ENCODE measurements at regions of chr2 and their contacts with region 1.

Region 1: GRCh38 chr2:72862239-72862988 is 24.8 kb upstream of the SPR start:
- DNase-seq: peak; percentile 38
- H3K4me3 ChIP-seq: peak overlapping the region; percentile 39
- CTCF ChIP-seq: peak; percentile 100

Region 2: DNA sequence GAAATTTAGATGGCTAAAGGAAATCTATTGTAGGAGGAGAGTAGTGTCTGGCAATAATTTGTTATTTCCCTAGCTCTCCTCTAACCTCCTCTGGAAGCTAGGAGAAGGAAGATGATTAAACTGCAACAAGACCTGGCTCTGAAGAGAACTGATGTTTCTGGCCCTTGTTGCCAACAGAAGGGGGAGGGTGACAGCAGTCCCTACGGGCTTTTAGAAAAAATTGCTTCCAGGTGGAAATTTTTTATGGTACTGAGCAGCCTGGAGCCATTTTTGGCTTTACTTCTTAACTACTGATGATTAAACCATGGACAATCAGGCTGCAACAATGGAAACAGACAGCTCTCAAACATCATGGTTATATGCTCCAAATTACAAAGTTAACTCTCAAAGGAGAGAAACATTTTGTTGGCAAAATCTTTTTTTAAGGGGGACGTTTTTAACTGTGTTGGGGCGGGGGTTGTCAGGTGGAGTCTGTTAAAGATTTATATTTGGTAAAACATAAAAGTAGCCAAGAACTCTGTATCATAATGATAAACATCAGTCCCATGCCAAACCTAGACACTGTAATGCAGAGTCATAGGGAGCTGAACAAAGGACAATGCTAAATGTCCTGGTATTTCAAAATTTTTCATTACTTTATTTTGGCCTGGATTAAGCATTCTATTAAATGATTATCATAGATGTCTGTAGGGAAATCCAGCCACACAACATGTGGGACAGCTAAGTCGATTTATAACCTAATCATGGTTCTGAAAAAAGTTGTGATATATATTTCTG is 106.6 kb before region 1 on chr2:
- CTCF ChIA-PET with region 1: interaction called, 25 read pairs
- POLR2A ChIA-PET with region 1: no interaction called
- DNase-seq: no peak
- H3K4me3 ChIP-seq: no peak overlapping the region
- CTCF ChIP-seq: no peak

Region 3: GRCh38 chr2:72780477-72780876 is 81.9 kb before region 1 on chr2:
- CTCF ChIA-PET with region 1: interaction called, 18 read pairs
- POLR2A ChIA-PET with region 1: no interaction called
- DNase-seq: no peak
- H3K4me3 ChIP-seq: no peak overlapping the region
- CTCF ChIP-seq: no peak

Region 4: GRCh38 chr2:72793798-72794440 is 68.5 kb before region 1 on chr2:
- CTCF ChIA-PET with region 1: interaction called, 31 read pairs
- POLR2A ChIA-PET with region 1: no interaction called
- DNase-seq: no peak
- H3K4me3 ChIP-seq: no peak overlapping the region
- CTCF ChIP-seq: no peak

Region 5: DNA sequence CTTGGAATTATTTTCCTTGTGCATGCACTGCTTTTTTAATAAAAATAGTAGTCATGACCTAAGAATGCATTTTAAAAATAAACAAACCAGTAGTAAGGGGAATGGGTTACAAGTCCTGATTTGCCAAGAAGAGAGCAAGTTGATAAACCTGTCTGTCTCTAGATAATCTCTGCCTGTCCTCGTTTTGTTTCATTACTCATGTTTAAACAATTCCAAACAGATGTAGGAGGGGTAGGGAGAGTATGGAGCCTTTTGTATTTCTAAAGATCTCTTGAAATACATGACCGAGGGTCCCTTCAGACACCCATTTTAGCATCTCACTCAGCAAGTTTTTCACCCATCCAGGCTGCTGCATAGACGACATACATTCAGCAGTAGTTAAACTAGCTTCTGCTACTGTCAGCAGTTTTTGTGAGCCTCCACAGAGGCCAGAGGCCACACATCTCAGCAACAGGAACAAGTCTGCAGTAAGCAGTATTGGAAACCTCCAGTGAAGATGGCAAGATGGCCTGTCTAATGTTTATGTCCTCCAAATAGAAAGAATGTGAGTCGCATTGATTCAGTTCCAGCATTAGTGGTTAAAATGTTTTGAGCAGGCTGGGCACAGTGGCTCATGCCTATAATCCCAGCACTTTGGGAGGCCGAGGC is 34.3 kb before region 1 on chr2:
- CTCF ChIA-PET with region 1: interaction called, 19 read pairs
- POLR2A ChIA-PET with region 1: no interaction called
- DNase-seq: peak; percentile 29
- H3K4me3 ChIP-seq: no peak overlapping the region
- CTCF ChIP-seq: no peak

Region 6: DNA sequence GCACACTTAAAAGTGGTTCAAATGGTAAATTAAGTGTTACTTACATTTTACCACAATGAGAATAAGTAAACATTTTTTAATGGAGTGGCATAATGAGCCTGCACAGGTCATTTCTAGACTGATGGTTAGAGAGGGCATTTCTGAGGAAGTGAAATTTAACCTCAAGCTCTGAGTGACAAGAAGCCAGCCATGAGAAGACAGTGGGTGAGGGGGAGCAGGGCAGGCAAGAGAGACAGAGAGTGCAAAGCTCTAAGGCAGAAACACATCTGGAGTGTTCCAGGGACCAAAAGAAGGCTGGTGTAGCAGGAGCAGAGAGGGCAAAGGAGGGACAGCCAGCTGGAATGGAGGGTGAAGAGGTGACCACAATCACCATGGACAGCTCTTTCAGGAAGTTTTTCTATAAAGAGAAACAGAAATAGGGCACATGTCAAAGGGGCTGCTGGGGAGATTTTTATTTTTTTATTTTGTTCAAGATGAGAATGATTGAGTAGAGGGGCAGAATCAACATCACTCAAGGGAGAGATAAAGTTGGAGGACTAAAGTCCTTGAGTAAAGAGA is 15.8 kb before region 1 on chr2:
- CTCF ChIA-PET with region 1: interaction called, 47 read pairs
- POLR2A ChIA-PET with region 1: no interaction called
- DNase-seq: no peak
- H3K4me3 ChIP-seq: no peak overlapping the region
- CTCF ChIP-seq: no peak

Region 7: DNA sequence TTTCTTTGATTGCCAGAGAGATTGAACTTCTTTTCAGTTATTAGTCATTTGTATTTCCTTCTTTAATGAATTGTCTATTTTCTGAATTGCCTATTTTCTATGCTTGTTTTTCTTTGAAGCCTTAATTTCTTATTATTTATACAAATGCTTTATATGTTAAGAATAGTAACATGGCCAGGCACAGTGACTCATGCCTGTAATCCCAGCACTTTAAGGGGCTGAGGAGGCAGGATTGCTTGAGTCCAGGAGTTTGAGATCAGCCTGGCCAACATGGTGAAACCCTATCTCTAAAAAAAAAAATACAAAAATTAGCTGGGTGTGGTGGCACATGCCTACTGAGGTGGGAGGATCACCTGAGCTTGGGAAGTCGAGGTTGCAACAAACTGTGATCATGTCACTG is 255.0 kb after region 1 on chr2:
- CTCF ChIA-PET with region 1: no interaction called
- POLR2A ChIA-PET with region 1: no interaction called
- DNase-seq: no peak
- H3K4me3 ChIP-seq: no peak overlapping the region
- CTCF ChIP-seq: no peak